ENCODE measurements at regions of chr16 and their contacts with region 1.

Region 1: GRCh38 chr16:25051406-25052150 is 36.4 kb upstream of the ARHGAP17 start:
- DNase-seq: no peak
- ATAC-seq: peak in 6 of 8 donors; percentile 35 to 71 (median 60)
- H3K4me3 ChIP-seq: peak overlapping the region in 5 of 10 donors; percentile 5 to 24 (median 20)
- H3K27ac ChIP-seq: peak overlapping the region; percentile 36 to 97 (median 78)
- H3K4me1 ChIP-seq: peaks cover 0 to 54% (median 29%) of the 10 kb centered on the region in 9 donors
- H3K27me3 ChIP-seq: no peaks in the 10 kb centered on the region
- CTCF ChIP-seq: no peak

Region 2: DNA sequence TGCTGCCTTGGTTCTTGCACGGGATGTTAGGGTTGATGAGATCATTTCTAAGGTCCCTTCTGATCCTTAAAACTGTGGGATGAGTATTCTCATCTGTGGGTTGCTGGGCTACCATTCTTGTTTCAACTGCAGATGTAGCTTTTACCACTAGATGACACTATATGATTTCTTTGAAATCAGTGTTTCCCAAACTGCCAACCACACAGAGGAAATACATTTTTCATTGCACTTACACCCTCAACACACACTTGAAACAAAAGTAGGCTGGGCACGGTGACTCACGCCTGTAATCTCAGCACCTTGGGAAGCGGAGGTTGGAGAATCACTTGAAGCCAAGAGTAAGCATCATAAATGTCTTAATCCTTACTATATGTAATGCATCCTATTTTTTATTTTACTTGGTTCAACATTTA is 75.2 kb after region 1 on chr16:
- intact Hi-C with region 1: loop called in 7 of 10 experiments (anchors 1 to 5 kb)
- DNase-seq: no peak
- ATAC-seq: peak in 2 of 8 donors; percentile 29 to 37
- H3K4me3 ChIP-seq: no peak overlapping the region
- H3K27ac ChIP-seq: no peak overlapping the region
- H3K4me1 ChIP-seq: peaks cover 0 to 19% (median 0%) of the 10 kb centered on the region in 9 donors
- H3K27me3 ChIP-seq: no peaks in the 10 kb centered on the region
- CTCF ChIP-seq: peak in 7 of 9 donors; percentile 25 to 61 (median 40)

Region 3: GRCh38 chr16:25279491-25279890 is 227.9 kb after region 1 on chr16:
- intact Hi-C with region 1: no loop called
- DNase-seq: no peak
- ATAC-seq: no peak
- H3K4me3 ChIP-seq: no peak overlapping the region
- H3K27ac ChIP-seq: no peak overlapping the region
- H3K4me1 ChIP-seq: no peaks in the 10 kb centered on the region
- H3K27me3 ChIP-seq: peaks cover 0 to 5% (median 0%) of the 10 kb centered on the region in 7 donors
- CTCF ChIP-seq: no peak